Adrenal gland (tissue), 19 donors: ENCODE measurements at regions of chr3 and their contacts with region 1.

Region 1: DNA sequence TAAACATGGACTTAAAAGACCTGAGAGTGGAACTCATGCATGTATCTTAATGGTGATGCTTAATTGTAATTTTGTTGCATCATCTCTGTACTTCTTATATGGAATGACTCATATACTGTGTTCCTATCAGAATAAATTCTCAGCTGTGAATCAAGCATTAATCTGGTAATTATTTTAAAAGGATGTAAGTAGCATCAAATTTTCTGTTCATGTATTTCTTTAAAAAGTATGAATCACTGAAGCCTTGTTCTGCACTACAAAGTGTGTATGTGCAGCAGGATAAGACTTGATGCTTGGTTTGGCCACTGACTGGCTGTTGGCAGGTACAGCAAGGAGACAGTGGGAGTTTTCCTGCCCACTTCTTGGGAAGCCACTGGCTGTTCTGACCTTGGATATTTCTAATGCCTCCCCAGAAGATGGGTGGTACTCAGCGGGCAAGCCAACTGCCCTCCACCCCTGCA is 123.9 kb downstream of the ANO10 start:
- DNase-seq: no peak
- H3K4me3 ChIP-seq: no peak overlapping the region
- H3K27ac ChIP-seq: no peak overlapping the region
- H3K4me1 ChIP-seq: peaks cover 0 to 6% of the 10 kb centered on the region in 2 donors
- H3K27me3 ChIP-seq: no peaks in the 10 kb centered on the region
- CTCF ChIP-seq: no peak
- POLR2A ChIP-seq: no peak

Region 2: DNA sequence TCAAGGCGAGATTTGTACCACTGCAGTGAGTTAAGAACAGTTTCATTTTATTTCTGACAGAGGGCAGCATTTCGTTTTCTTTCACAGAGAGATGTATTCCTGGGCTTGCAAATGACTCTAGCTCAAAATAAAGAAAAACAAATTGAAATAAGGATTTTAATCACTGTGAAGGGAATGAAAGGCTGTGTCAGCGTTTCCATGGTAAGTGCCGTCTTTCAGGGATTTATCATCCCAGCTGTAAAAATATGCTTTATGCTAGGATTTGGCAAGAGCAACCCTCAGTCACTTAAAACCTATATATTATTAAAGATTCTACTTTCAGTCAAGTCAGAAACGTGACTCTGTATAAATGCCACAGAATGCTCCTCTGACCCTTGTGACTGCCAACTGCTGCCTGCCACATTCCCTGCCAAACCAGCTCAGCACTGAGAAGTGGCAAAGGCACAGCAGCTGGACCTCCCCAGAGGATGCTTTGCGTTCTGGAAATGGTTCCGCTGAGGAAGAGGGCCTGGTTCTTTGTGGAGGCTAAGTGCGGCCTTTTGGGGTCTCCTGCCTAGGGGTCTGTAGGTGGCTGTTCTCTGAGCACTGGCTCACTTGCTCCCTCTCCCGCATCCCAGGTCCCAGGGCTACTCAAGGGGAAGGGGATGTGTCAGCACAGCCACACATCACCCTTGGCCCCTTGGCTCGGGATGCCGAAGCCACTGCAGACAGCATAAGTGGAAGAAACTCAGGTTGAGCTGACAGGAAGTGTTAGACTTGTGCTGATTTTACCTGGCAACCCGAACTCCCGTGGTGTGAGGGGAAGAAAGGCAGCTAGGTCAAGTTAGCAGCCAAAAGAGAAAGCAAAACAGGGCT is 335.5 kb before region 1 on chr3:
- intact Hi-C with region 1: loop called in 1 of 2 experiments (anchors 5 kb)
- DNase-seq: no peak
- H3K4me3 ChIP-seq: no peak overlapping the region
- H3K27ac ChIP-seq: peak overlapping the region in 1 of 5 donors; percentile 51
- H3K4me1 ChIP-seq: peaks cover 0 to 7% of the 10 kb centered on the region in 2 donors
- H3K27me3 ChIP-seq: no peaks in the 10 kb centered on the region
- CTCF ChIP-seq: peak; percentile 9 to 63 (median 52)
- POLR2A ChIP-seq: no peak

Region 3: GRCh38 chr3:43369404-43370292 is 128.3 kb before region 1 on chr3:
- intact Hi-C with region 1: no loop called
- DNase-seq: peak in 1 of 7 donors; percentile 47
- H3K4me3 ChIP-seq: no peak overlapping the region
- H3K27ac ChIP-seq: no peak overlapping the region
- H3K4me1 ChIP-seq: no peaks in the 10 kb centered on the region
- H3K27me3 ChIP-seq: no peaks in the 10 kb centered on the region
- CTCF ChIP-seq: no peak
- POLR2A ChIP-seq: no peak

Region 4: DNA sequence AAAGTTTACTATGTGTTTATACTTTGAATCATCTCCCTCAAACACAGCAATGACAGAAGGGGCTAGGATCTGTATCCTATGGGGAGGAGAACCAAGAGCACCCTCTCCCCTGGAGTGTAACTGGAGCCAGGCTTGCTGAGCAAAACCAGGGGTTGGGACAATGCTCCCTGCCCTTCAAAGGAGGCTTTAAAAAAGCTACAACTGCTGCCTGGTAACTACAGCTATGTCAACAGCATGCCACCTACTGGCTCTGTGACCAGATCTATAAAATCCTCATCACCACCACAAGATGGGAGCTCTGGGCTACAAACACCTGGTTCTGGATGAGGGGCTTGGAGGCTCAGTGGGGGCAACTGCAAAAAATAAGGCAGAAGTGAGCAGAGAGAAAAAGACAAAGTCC is 62.0 kb after region 1 on chr3:
- intact Hi-C with region 1: no loop called
- DNase-seq: no peak
- H3K4me3 ChIP-seq: no peak overlapping the region
- H3K27ac ChIP-seq: no peak overlapping the region
- H3K4me1 ChIP-seq: no peaks in the 10 kb centered on the region
- H3K27me3 ChIP-seq: no peaks in the 10 kb centered on the region
- CTCF ChIP-seq: no peak
- POLR2A ChIP-seq: no peak